ENCODE measurements at regions of chr20 and their contacts with region 1.

Region 1: DNA sequence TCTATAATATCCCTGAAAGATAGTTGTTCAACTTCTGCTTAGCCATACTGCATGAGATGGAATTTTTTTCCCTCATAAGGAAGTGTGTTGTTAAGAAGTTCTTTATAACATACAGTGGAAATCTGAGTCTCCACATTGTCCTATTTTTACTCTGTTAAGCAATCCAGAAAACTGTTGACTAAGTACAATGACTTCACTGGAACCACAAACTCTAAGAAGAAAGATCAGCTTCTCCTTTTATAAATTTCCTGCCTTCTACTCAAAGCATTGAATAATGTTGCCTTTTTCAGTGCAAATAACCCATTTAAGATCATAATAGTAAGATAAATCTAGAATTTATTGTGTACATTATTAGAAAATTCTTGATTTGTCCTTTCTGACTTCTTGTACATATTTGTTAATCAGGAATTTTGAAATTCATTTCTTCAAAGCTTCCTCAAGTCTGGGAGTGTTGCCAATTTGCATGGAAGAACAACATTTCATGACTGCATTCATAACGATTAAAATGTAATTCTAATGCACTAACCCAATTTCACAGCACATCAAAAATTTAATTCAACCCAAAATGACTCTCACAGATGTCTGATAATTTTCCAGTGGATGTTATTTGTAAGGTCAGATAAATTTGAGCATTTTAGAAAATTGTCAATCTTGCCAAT is 45.6 kb upstream of the ANKEF1 start:
- DNase-seq: no peak
- H3K4me3 ChIP-seq: no peak overlapping the region
- CTCF ChIP-seq: no peak
- POLR2A ChIP-seq: no peak

Region 2: DNA sequence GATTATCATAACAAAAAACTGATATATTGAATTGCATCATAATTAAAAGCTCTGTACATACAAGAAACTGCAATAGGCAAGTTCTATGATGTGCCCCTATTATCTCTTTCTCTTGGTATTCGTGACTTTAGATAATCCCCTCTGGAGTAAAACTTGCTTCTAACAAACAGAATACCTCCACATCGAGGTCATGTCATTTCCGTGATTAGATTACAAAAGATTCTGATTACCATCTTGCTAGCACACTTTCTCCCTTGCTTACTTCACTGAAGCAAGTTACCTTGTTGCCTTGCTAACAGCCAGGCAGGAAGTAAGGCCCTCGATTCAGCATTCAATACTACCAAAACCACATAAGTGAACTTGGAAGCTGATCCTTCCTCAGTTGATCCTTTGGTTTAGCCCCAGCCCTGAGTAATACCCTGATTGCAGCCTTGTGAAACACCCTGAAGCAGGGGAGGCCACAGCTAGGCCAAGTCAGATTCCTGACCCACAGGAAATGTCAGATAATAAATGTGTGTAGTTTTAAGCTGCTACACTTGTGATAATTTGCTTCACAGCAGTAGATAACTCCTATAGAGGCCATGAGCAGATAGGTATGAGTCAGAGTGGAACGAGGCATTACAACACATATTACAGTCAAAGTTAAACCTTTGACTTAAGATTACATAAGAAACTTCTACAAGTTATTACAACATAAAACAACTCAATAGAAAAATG is 1915.9 kb before region 1 on chr20:
- intact Hi-C with region 1: no loop called
- DNase-seq: no peak
- H3K4me3 ChIP-seq: no peak overlapping the region
- CTCF ChIP-seq: no peak
- POLR2A ChIP-seq: no peak

Region 3: DNA sequence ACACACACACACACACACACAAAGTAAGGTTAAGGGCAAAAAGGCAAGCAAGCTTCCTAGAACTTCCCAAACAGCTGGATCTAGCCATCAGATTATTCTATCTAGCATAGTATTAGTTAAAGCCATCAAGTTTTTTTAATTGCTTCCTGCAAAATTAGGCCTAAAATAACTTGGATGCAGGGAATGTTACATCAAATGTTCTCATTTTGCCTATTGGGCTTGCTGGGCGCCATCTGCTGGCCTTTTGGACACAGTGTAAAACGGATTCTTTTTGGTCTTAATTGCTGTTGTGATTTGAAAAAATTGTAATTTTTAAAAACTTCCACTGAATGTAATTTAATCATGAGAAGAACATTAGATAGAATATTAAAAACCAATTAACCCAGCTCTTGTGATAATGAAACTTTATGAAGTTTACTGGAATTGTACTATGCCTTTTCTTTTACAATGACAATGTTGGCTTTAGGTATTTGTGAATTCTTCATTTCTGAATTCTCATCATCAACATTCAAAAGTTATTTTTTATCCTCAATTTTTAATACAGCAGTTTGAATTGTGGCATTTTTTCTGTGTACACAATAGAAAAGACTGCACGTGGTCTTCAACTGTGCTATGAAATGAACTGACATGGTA is 438.0 kb after region 1 on chr20:
- intact Hi-C with region 1: loop called (anchors 10 kb)
- DNase-seq: no peak
- H3K4me3 ChIP-seq: no peak overlapping the region
- CTCF ChIP-seq: no peak
- POLR2A ChIP-seq: no peak